ENCODE measurements at regions of chr9 and their contacts with region 1.

Region 1: GRCh38 chr9:130693426-130694191 is at the start of gene EXOSC2:
- DNase-seq: peak; percentile 96 to 99 (median 98)
- ATAC-seq: peak; percentile 98
- H3K4me3 ChIP-seq: peak within 1 kb of the TSS; percentile 77
- H3K4me3 Mint-ChIP-seq: peak within 1 kb of the TSS; percentile 95
- H3K27ac ChIP-seq: peak within 1 kb of the TSS; percentile 42 to 57
- H3K27ac Mint-ChIP-seq: peak within 1 kb of the TSS; percentile 79
- H3K4me1 ChIP-seq: peaks cover 31% of the 10 kb centered on the region
- H3K4me1 Mint-ChIP-seq: peaks cover 44% of the 10 kb centered on the region
- H3K27me3 ChIP-seq: no peaks in the 10 kb centered on the region
- H3K27me3 Mint-ChIP-seq: no peaks in the 10 kb centered on the region
- CTCF ChIP-seq: no peak
- total RNA-seq, gene EXOSC2: 49.2 to 50.2 TPM

Region 2: GRCh38 chr9:129889941-129890717 is 803.5 kb before region 1 on chr9:
- CTCF ChIA-PET with region 1: no interaction called
- POLR2A ChIA-PET with region 1: no interaction called
- intact Hi-C with region 1: loop called in 1 of 2 experiments (anchors 5 kb)
- DNase-seq: peak; percentile 46 to 91 (median 64)
- ATAC-seq: no peak
- H3K4me3 ChIP-seq: peak overlapping the region; percentile 50
- H3K4me3 Mint-ChIP-seq: peak overlapping the region; percentile 96
- H3K27ac ChIP-seq: peak overlapping the region; percentile 91 to 99
- H3K27ac Mint-ChIP-seq: peak overlapping the region; percentile 99
- H3K4me1 ChIP-seq: peaks cover 98% of the 10 kb centered on the region
- H3K4me1 Mint-ChIP-seq: peaks cover 87% of the 10 kb centered on the region
- H3K27me3 ChIP-seq: no peaks in the 10 kb centered on the region
- H3K27me3 Mint-ChIP-seq: no peaks in the 10 kb centered on the region
- CTCF ChIP-seq: no peak

Region 3: DNA sequence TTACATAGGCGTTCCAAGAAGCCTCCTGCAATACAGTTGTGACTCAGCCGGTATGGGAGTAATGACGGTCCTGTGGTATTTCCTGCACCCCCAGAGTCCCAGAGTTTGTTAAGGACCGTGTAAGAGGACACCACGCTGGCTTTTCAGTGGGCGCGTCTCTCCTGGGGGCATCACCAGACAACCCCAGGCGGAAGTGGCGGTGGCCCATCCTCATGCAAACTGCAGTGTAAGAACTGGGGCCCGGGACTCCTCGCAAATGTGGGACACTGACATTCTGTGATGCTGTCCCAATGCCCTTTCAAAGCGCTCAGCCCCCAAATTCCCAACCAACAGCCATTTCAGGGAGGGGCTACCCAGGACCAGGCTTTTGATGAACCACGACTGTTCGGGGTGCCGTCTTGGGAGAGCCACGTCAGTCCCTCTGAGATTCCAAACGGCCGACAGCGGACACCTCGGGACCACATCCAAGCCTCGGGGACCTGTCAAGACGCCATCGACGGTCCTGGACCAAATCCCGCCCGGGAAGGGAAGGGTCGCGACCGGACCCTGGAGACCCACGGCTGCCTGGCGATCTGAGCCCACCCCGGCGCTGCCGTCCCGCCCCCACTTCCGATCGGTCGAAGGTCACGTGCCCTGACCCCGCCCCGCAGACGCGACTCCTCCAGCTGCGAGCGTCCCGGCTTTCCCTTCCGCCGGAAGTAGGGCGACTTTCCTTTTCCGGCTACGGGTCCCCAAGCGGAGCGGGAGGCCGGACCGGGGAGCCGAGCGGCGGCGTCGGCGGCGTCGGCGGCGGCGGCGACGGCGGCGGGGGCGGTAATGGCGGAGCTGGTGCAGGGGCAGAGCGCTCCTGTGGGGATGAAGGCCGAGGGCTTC is 114.5 kb before region 1 on chr9 and contains the start of gene FUBP3:
- CTCF ChIA-PET with region 1: no interaction called
- POLR2A ChIA-PET with region 1: no interaction called
- intact Hi-C with region 1: loop called in 1 of 2 experiments (anchors 5 kb)
- DNase-seq: peak; percentile 63 to 93 (median 86)
- ATAC-seq: peak; percentile 72
- H3K4me3 ChIP-seq: peak within 1 kb of the TSS; percentile 97
- H3K4me3 Mint-ChIP-seq: peak within 1 kb of the TSS; percentile 88
- H3K27ac ChIP-seq: peak within 1 kb of the TSS; percentile 77 to 87
- H3K27ac Mint-ChIP-seq: peak within 1 kb of the TSS; percentile 80
- H3K4me1 ChIP-seq: peaks cover 26% of the 10 kb centered on the region
- H3K4me1 Mint-ChIP-seq: peaks cover 60% of the 10 kb centered on the region
- H3K27me3 ChIP-seq: no peaks in the 10 kb centered on the region
- H3K27me3 Mint-ChIP-seq: no peaks in the 10 kb centered on the region
- CTCF ChIP-seq: no peak
- total RNA-seq, gene FUBP3: 21.2 to 30.2 TPM

Region 4: DNA sequence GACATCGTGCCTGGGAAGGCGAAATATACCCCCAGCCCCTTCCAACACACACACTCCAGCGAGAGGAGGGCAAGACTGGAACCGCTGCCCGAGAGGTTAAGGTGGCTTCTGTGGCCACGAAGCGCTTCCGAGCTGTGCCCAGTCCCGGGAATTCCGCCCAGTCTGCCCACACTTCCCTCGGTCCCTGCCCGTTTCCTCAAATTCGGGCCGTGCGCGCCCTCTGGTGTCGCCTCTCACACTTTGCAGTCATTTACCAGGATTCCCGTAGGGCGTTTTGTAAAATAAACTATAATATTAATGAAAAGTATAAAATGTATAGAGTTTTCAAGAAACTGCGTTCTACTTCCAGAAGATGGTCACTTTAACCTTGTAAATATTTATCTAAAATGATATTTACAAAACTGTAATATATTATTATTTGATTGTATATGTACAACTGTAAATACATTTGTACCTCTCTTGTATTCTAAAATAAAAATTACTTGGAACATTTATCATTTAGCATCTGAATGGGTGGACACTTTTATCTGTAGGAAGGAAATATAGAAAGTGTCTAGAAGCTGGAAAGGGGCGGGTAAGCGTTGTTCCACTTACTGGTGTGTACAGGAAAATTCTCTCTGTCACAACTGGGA is 11.0 kb before region 1 on chr9:
- CTCF ChIA-PET with region 1: interaction called, 15 read pairs
- POLR2A ChIA-PET with region 1: interaction called, 19 read pairs
- intact Hi-C with region 1: no loop called
- DNase-seq: peak; percentile 24 to 81 (median 52)
- ATAC-seq: peak; percentile 48
- H3K4me3 ChIP-seq: peak overlapping the region; percentile 70
- H3K4me3 Mint-ChIP-seq: peak overlapping the region; percentile 97
- H3K27ac ChIP-seq: no peak overlapping the region
- H3K27ac Mint-ChIP-seq: peak overlapping the region; percentile 24
- H3K4me1 ChIP-seq: peaks cover 17% of the 10 kb centered on the region
- H3K4me1 Mint-ChIP-seq: peaks cover 12% of the 10 kb centered on the region
- H3K27me3 ChIP-seq: peaks cover 5 to 6% of the 10 kb centered on the region in 2 experiments
- H3K27me3 Mint-ChIP-seq: peaks cover 27% of the 10 kb centered on the region
- CTCF ChIP-seq: peak; percentile 97

Region 5: DNA sequence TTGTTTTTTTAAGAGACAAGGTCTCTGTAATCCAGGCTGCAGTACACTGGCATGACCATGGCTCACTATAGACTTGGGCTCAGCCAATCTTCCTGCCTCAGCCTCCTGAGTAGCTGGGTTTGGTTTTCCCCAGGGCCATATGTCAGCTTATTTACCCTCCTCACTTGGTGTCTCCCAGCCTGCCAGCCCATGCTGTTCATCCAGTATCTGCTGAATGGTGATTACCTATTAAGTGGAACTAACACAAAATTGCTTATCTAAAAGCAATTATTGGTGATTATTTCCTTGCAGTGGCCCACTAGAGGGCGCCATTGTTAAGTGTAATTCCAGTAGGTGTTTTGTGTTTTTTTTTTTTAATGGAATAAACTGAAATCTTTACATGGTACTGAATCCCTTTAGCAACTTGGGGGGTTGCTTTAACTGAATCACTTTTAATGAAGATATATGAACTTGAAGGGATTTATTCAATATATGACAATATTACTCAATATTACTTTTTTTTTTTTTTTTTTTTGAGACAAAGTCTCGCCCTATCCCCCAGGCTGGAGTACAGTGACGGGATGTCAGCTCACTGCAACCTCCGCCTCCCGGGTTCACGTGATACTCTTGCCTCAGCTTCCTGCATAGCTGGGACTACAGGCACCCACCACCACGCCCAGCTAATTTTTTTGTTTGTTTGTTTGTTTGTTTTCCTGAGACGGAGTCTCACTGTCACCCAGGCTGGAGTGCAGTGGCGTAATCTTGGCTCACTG is 13.8 kb after region 1 on chr9:
- CTCF ChIA-PET with region 1: no interaction called
- POLR2A ChIA-PET with region 1: interaction called, 14 read pairs
- intact Hi-C with region 1: loop called (anchors 1 to 2 kb)
- DNase-seq: peak; percentile 49 to 88 (median 68)
- ATAC-seq: peak; percentile 63
- H3K4me3 ChIP-seq: no peak overlapping the region
- H3K4me3 Mint-ChIP-seq: no peak overlapping the region
- H3K27ac ChIP-seq: no peak overlapping the region
- H3K27ac Mint-ChIP-seq: peak overlapping the region; percentile 2
- H3K4me1 ChIP-seq: peaks cover 5% of the 10 kb centered on the region
- H3K4me1 Mint-ChIP-seq: peaks cover 12% of the 10 kb centered on the region
- H3K27me3 ChIP-seq: no peaks in the 10 kb centered on the region
- H3K27me3 Mint-ChIP-seq: no peaks in the 10 kb centered on the region
- CTCF ChIP-seq: peak; percentile 87

Region 6: GRCh38 chr9:130712564-130713285 is 19.1 kb after region 1 on chr9:
- CTCF ChIA-PET with region 1: no interaction called
- POLR2A ChIA-PET with region 1: interaction called, 14 read pairs
- intact Hi-C with region 1: loop called (anchors 1 to 2 kb)
- DNase-seq: peak; percentile 89 to 97 (median 92)
- ATAC-seq: peak; percentile 97
- H3K4me3 ChIP-seq: peak overlapping the region; percentile 97
- H3K4me3 Mint-ChIP-seq: peak overlapping the region; percentile 93
- H3K27ac ChIP-seq: peak overlapping the region; percentile 86 to 95
- H3K27ac Mint-ChIP-seq: peak overlapping the region; percentile 87
- H3K4me1 ChIP-seq: peaks cover 29% of the 10 kb centered on the region
- H3K4me1 Mint-ChIP-seq: peaks cover 35% of the 10 kb centered on the region
- H3K27me3 ChIP-seq: no peaks in the 10 kb centered on the region
- H3K27me3 Mint-ChIP-seq: no peaks in the 10 kb centered on the region
- CTCF ChIP-seq: no peak

Region 7: DNA sequence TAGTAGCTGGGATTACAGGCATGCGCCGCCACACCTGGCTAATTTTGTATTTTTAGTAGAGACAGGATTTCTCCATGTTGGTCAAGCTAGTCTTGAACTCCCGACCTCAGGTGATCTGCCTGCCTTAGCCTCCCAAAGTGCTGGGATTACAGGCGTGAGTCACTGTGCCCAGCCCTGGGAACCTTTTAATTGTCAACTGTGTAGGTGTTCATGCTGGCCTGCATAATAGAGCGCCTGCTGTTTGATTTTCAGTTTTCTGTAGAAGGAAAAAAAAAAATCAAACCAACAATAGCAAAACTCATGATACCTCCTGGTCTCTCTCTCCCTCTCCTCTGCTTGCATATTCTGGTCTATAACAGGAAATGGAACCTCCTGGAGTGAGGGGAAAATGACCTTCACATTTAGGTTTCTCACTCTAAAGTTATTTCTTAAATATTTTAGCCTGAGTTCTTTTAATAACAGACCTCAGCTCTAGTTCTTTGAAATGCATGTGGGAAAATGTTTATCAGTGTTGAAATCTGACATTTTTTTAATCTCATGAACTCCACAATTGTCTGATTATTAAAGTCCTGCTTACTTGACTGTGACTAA is 51.7 kb after region 1 on chr9:
- CTCF ChIA-PET with region 1: no interaction called
- POLR2A ChIA-PET with region 1: no interaction called
- intact Hi-C with region 1: no loop called
- DNase-seq: no peak
- ATAC-seq: no peak
- H3K4me3 ChIP-seq: no peak overlapping the region
- H3K4me3 Mint-ChIP-seq: no peak overlapping the region
- H3K27ac ChIP-seq: no peak overlapping the region
- H3K27ac Mint-ChIP-seq: no peak overlapping the region
- H3K4me1 ChIP-seq: no peaks in the 10 kb centered on the region
- H3K4me1 Mint-ChIP-seq: peaks cover 23% of the 10 kb centered on the region
- H3K27me3 ChIP-seq: no peaks in the 10 kb centered on the region
- H3K27me3 Mint-ChIP-seq: no peaks in the 10 kb centered on the region
- CTCF ChIP-seq: no peak

Region 8: DNA sequence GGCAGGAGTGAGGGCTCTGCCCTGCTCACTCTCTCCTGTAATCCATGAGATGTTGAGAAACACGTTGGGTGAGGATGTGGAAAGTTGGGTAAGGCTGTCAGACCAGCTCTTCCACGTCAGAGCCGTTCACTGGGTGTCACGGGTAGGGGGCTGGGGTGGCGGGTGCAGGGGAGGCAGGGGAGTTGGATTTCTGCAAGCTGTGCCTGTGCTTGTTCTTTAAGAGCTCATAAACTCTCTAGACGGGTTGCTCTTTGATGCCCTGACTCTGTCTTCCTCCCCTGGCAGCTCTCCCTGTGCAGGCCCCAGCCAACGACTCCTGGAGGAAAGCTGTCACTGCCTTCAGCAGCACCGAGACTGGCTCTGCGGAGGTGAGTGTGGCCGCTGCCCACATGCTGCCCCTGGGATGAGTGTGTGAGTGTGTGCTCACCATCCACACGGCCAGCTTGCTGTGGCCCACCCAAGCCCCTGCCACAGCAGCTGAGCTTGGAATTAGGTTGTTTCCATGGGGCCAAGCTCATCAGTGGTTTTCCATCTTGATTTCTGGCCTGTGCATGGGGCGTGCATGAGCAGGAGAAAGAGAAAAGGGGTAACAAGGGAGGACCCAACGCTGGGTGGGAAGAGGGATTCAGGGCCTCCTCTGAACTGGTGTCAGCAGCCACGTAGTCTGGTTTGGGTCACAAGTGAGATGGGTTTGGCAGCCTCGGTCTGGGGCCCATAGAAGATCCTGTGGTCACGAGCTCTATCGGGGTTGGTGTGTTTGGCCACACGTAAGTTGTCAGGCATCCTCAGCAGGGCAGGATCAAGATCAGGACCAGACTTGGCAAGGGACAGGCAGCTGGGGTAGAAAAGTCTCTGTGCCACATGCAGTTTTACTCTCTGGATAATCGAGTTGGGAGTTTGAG is 788.1 kb after region 1 on chr9:
- CTCF ChIA-PET with region 1: no interaction called
- POLR2A ChIA-PET with region 1: no interaction called
- intact Hi-C with region 1: no loop called
- DNase-seq: no peak
- ATAC-seq: no peak
- H3K4me3 ChIP-seq: no peak overlapping the region
- H3K4me3 Mint-ChIP-seq: no peak overlapping the region
- H3K27ac ChIP-seq: no peak overlapping the region
- H3K27ac Mint-ChIP-seq: peak overlapping the region; percentile 73
- H3K4me1 ChIP-seq: no peaks in the 10 kb centered on the region
- H3K4me1 Mint-ChIP-seq: peaks cover 6% of the 10 kb centered on the region
- H3K27me3 ChIP-seq: no peaks in the 10 kb centered on the region
- H3K27me3 Mint-ChIP-seq: no peaks in the 10 kb centered on the region
- CTCF ChIP-seq: no peak

Measured in CD4-positive, alpha-beta T cell (primary cell).